ENCODE measurements at regions of chr1 and their contacts with region 1.

Region 1: DNA sequence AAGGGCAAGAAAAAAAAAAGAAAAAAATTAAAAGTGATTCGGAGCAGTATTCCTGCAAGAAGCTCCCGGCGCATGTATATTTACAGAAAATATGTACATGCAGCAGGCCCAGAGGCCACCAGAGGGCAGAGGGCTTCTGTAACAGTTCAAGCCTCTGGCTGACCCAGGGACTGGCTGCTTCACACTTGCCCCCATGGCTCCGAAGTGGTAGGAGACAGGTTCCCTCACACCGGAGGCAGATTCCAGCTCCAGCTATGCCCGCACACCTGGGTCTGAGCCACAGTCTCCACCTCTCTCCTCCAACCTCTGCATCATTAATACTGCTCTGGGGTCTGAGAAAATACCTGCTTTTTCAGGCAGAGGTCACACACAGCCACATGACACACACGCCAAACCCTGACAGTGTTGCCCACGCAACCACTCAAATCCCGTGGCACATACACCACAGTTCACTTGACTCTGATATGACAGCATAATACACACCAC is 2.2 kb upstream of the ARHGAP30 start:
- DNase-seq: peak; percentile 64
- H3K4me3 Mint-ChIP-seq: no peak overlapping the region
- H3K27ac Mint-ChIP-seq: peak overlapping the region; percentile 39
- H3K4me1 Mint-ChIP-seq: peaks cover 31% of the 10 kb centered on the region
- H3K27me3 Mint-ChIP-seq: no peaks in the 10 kb centered on the region

Region 2: DNA sequence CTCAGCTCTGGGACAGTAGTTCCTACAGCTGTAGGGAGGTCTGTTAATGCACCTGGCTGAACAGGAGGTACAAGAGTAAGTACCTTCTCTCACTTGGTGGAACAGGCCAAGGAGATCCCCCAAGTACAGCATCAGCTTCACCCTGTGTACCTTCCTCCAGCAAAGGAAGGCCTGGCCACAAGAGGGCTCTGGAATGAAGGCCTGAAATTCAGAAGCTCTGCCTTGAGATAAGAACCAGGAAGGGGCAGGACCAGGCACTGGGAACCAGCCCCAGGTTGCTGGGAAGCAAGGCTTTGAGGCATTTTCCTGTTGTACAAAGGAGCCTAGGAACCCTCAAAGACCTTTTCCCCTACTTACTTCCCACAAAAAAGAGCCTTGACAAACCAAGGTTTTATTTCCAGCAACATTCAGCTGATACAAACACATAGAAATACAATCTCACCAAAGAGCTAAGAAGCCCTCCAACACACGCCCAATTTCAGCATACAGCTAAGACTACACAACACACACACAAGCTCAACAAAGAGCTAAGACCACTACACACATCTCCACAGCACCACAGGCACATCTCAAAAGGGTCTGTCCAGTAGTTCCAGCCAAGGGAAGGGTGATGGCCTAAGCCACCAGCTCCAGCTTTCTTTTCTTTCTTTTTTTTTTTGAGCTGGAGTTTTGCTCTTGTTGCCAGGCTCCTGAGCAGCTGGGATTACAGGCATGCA is 74.4 kb before region 1 on chr1:
- CTCF ChIA-PET with region 1: interaction called, 5 read pairs
- POLR2A ChIA-PET with region 1: interaction called, 3 read pairs
- intact Hi-C with region 1: loop called (anchors 2 kb)
- DNase-seq: peak; percentile 68
- H3K4me3 Mint-ChIP-seq: no peak overlapping the region
- H3K27ac Mint-ChIP-seq: peak overlapping the region; percentile 31
- H3K4me1 Mint-ChIP-seq: peaks cover 22% of the 10 kb centered on the region
- H3K27me3 Mint-ChIP-seq: no peaks in the 10 kb centered on the region

Region 3: GRCh38 chr1:161045750-161046571 is 26.0 kb before region 1 on chr1 and contains the start of gene USF1:
- CTCF ChIA-PET with region 1: interaction called, 21 read pairs
- POLR2A ChIA-PET with region 1: interaction called, 39 read pairs
- intact Hi-C with region 1: loop called (anchors 1 kb)
- DNase-seq: peak; percentile 96
- H3K4me3 Mint-ChIP-seq: peak within 1 kb of the TSS; percentile 90
- H3K27ac Mint-ChIP-seq: peak within 1 kb of the TSS; percentile 96
- H3K4me1 Mint-ChIP-seq: peaks cover 29% of the 10 kb centered on the region
- H3K27me3 Mint-ChIP-seq: no peaks in the 10 kb centered on the region
- total RNA-seq, gene USF1: 43.4 to 43.7 TPM

Region 4: GRCh38 chr1:161061419-161061818 is 10.5 kb before region 1 on chr1:
- CTCF ChIA-PET with region 1: interaction called, 13 read pairs
- POLR2A ChIA-PET with region 1: interaction called, 10 read pairs
- intact Hi-C with region 1: no loop called
- DNase-seq: no peak
- H3K4me3 Mint-ChIP-seq: no peak overlapping the region
- H3K27ac Mint-ChIP-seq: no peak overlapping the region
- H3K4me1 Mint-ChIP-seq: peaks cover 55% of the 10 kb centered on the region
- H3K27me3 Mint-ChIP-seq: no peaks in the 10 kb centered on the region

Region 5: DNA sequence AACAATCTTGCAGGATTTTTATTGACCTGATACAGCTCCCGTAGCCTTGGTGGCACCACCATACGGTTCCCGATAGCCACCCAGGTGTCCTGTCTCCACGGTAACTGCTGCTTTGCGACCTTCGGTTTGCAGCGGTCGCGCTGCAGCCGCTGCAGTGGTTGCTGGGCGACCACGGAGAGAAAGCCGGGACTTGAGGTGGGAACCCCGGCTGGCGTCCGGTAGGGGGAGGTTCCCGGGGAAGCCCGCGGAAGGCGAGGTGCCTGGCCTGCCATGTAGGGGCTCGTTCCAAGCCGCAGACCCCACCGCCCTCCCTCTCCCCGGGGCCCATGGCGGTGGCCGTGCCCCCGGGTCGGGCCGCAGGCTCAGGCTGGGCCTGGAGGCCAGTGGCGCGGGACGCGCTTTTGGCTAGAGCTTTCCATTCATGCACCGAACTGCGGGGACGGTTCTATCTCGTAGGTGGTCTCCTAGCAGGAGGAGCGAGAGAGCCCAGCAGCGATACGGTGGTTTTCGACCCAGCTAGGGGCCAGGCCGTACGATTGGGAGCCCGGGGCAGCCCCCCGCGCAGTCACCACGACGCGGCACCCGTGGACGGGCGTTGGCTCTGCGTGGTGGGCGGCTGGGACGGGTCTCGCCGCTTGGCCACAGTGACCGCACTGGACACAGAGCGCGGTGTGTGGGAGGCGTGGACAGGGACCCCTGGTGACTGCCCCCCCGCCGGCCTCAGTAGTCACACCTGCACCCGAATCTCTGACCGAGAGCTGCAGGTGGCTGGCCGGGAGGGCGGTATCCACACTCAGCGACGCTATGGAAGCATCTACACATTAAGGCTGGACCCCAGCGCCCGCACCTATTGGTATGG is 26.5 kb after region 1 on chr1 and contains the start of gene KLHDC9:
- CTCF ChIA-PET with region 1: interaction called, 120 read pairs
- POLR2A ChIA-PET with region 1: interaction called, 15 read pairs
- intact Hi-C with region 1: loop called (anchors 1 kb)
- DNase-seq: peak; percentile 87
- H3K4me3 Mint-ChIP-seq: peak within 1 kb of the TSS; percentile 73
- H3K27ac Mint-ChIP-seq: peak within 1 kb of the TSS; percentile 74
- H3K4me1 Mint-ChIP-seq: peaks cover 37% of the 10 kb centered on the region
- H3K27me3 Mint-ChIP-seq: no peaks in the 10 kb centered on the region
- total RNA-seq, gene KLHDC9: 1.2 to 1.6 TPM

Region 6: GRCh38 chr1:161132410-161133219 is 60.7 kb after region 1 on chr1 and contains the start of gene DEDD:
- CTCF ChIA-PET with region 1: interaction called, 22 read pairs
- POLR2A ChIA-PET with region 1: interaction called, 5 read pairs
- intact Hi-C with region 1: no loop called
- DNase-seq: peak; percentile 96
- H3K4me3 Mint-ChIP-seq: no peak within 1 kb of the TSS
- H3K27ac Mint-ChIP-seq: no peak within 1 kb of the TSS
- H3K4me1 Mint-ChIP-seq: peaks cover 43% of the 10 kb centered on the region
- H3K27me3 Mint-ChIP-seq: no peaks in the 10 kb centered on the region
- total RNA-seq, gene DEDD: 35.0 to 40.2 TPM

Region 7: GRCh38 chr1:161165742-161166668 is 94.1 kb after region 1 on chr1 and contains the start of gene PPOX:
- CTCF ChIA-PET with region 1: interaction called, 6 read pairs
- POLR2A ChIA-PET with region 1: interaction called, 4 read pairs
- intact Hi-C with region 1: loop called (anchors 5 kb)
- DNase-seq: peak; percentile 97
- H3K4me3 Mint-ChIP-seq: peak within 1 kb of the TSS; percentile 86
- H3K27ac Mint-ChIP-seq: peak within 1 kb of the TSS; percentile 93
- H3K4me1 Mint-ChIP-seq: peaks cover 48% of the 10 kb centered on the region
- H3K27me3 Mint-ChIP-seq: no peaks in the 10 kb centered on the region
- total RNA-seq, gene PPOX: 27.0 to 30.7 TPM

Region 8: DNA sequence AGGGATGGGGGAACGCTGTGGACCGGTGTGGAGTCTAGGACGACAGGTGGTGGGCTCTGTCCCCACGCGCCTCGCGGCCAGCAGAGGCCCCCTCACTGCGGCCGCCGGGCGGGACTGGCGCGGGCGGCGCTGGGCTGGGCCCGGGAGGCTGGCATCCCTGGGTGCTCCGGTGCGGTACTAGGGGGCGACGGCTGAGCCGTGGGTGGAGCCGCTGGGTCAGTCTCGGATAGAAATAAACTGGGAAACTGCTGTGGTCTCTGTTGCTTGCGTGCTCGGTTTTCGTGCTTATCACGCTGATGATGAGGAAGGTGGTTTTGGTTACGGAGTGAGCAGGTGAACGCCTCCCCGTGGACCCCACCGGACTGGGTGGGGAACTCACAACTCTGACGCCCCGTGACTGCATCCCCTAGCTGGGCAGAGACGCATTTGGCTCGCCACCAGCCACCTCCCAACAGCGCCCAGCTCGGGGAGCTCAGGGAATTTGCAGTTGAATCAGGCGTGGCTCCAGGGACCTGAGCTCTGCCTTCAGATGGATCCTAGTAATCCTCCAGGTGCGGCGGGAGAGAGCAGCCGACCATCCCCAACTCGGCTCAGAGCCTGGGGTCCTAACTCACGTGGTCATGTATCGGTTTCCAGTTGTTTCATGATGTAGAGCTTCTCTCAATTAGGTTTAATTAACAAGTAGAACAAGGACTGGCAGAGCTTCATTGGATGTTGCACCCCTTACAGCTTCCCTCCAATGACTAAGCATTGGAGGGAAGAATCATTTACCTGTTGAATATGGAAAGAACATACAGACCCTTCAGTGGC is 1750.7 kb after region 1 on chr1:
- CTCF ChIA-PET with region 1: no interaction called
- POLR2A ChIA-PET with region 1: no interaction called
- intact Hi-C with region 1: no loop called
- DNase-seq: peak; percentile 10
- H3K4me3 Mint-ChIP-seq: peak overlapping the region; percentile 36
- H3K27ac Mint-ChIP-seq: no peak overlapping the region
- H3K4me1 Mint-ChIP-seq: peaks cover 15% of the 10 kb centered on the region
- H3K27me3 Mint-ChIP-seq: peaks cover 30% of the 10 kb centered on the region

Measured in activated CD4-positive, alpha-beta memory T cell treated with anti-CD3 and anti-CD28 coated beads for 36 hours (primary cell).